HepG2 (cell line): ENCODE measurements at regions of chr7 and their contacts with region 1.

Region 1: DNA sequence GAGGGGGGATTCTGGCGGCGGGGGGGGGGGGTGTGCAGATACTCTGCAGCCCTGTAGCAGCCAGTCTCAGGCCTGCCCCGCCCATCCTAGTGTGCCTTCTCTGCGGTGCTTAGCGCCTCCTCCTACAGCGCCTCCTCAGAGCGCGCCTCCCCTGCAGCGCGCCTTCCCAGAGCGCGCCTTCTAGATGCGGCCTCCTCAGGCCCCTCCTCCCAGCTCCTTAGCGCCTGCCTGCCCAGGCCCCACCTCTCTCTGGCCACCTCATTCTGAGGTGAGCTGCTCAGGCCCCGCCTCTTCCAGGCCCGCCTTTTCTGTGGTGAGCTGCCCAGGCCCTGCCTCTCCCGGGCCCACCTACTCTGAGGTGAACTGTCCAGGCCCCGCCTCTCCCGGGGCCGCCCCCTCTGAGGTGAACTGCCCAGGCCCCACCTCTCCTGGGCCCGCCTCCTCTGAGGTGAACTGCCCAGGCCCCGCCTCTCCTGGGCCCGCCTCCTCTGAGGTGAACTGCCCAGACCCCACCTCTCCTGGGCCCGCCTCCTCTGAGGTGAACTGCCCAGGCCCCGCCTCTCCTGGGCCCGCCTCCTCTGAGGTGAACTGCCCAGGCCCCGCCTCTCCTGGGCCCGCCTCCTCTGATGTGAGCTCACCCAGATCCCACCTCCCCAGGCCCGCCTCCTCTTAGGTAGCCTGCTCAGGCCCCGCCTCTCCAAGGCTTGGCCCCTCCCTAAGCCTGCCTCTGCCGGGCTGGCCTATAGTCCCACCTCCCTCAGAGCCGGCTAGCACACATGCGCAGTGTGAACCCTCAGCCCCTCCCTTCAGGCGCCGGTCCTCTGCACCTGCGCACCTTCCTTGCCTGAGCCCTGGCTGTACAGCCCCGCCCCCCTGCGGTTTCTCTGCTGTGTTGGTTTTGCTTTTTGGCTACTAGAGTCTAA is 2.1 kb upstream of the SGCE start:
- DNase-seq: peak; percentile 90
- ATAC-seq: peak; percentile 89
- H3K4me3 ChIP-seq: peak overlapping the region in 2 of 3 experiments; percentile 55 to 78
- H3K27ac ChIP-seq: peak overlapping the region; percentile 77
- H3K4me1 ChIP-seq: peaks cover 22% of the 10 kb centered on the region
- H3K27me3 ChIP-seq: no peaks in the 10 kb centered on the region
- CTCF ChIP-seq: peak; percentile 32
- EP300 ChIP-seq: no peak
- POLR2A ChIP-seq: peak in 1 of 2 experiments; percentile 44; a peak in 1 of 4 replicates
- RAD21 ChIP-seq: no peak

Region 2: GRCh38 chr7:94449148-94449725 is 208.8 kb before region 1 on chr7:
- CTCF ChIA-PET with region 1: interaction called, 5 read pairs
- POLR2A ChIA-PET with region 1: interaction called, 37 read pairs
- in situ Hi-C with region 1: no loop called
- intact Hi-C with region 1: loop called (anchors 5 kb)
- DNase-seq: peak; percentile 45
- ATAC-seq: no peak
- H3K4me3 ChIP-seq: no peak overlapping the region
- H3K27ac ChIP-seq: no peak overlapping the region
- H3K4me1 ChIP-seq: peaks cover 57% of the 10 kb centered on the region
- H3K27me3 ChIP-seq: no peaks in the 10 kb centered on the region
- CTCF ChIP-seq: peak; percentile 63
- EP300 ChIP-seq: no peak
- POLR2A ChIP-seq: no peak
- RAD21 ChIP-seq: peak; percentile 68

Region 3: GRCh38 chr7:94620703-94621118 is 37.3 kb before region 1 on chr7:
- CTCF ChIA-PET with region 1: no interaction called
- POLR2A ChIA-PET with region 1: interaction called, 36 read pairs
- in situ Hi-C with region 1: no loop called
- intact Hi-C with region 1: loop called (anchors 1 kb)
- DNase-seq: peak; percentile 82
- ATAC-seq: peak; percentile 94
- H3K4me3 ChIP-seq: no peak overlapping the region
- H3K27ac ChIP-seq: peak overlapping the region; percentile 30
- H3K4me1 ChIP-seq: peaks cover 48% of the 10 kb centered on the region
- H3K27me3 ChIP-seq: no peaks in the 10 kb centered on the region
- CTCF ChIP-seq: no peak
- EP300 ChIP-seq: peak in 1 of 2 experiments; percentile 61; a peak in 1 of 4 replicates
- POLR2A ChIP-seq: no peak
- RAD21 ChIP-seq: no peak

Region 4: DNA sequence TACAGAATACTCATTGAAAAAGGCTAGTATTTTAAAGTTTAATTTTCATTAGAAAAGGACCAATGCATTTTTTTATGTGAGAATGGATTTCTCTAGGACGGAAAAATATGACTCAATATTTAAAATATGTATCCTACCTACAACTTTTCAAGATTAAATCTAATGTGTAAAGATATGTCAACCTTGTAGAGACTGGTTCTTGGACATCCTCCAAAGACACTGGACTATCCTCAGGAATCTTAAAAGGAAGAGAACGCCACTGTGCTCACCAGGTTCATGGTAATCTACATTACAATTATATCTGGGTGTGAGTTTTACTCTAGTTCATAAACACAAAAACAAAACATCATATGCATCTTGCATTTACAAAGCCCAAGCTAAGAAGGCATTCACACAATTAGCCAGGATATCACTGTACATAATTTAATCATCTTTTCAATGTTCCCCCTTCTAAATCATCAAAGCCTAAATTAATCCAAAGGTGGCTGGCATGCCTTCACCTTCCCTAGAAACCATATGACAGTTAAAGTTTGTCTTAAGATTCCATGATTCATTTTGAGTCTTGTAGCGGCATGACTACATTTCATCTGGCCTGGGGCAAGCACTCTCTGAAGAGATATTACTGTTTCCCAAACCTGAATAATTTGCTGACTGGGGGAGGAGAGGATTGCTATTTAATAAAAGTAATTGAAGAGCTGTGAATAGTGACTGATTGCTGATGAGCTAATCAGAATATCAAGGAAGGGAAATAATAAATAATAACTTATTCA is 14.1 kb before region 1 on chr7:
- CTCF ChIA-PET with region 1: no interaction called
- POLR2A ChIA-PET with region 1: interaction called, 33 read pairs
- in situ Hi-C with region 1: no loop called
- intact Hi-C with region 1: no loop called
- DNase-seq: no peak
- ATAC-seq: no peak
- H3K4me3 ChIP-seq: no peak overlapping the region
- H3K27ac ChIP-seq: peak overlapping the region; percentile 79
- H3K4me1 ChIP-seq: peaks cover 97% of the 10 kb centered on the region
- H3K27me3 ChIP-seq: no peaks in the 10 kb centered on the region
- CTCF ChIP-seq: no peak
- EP300 ChIP-seq: no peak
- POLR2A ChIP-seq: no peak
- RAD21 ChIP-seq: no peak

Region 5: DNA sequence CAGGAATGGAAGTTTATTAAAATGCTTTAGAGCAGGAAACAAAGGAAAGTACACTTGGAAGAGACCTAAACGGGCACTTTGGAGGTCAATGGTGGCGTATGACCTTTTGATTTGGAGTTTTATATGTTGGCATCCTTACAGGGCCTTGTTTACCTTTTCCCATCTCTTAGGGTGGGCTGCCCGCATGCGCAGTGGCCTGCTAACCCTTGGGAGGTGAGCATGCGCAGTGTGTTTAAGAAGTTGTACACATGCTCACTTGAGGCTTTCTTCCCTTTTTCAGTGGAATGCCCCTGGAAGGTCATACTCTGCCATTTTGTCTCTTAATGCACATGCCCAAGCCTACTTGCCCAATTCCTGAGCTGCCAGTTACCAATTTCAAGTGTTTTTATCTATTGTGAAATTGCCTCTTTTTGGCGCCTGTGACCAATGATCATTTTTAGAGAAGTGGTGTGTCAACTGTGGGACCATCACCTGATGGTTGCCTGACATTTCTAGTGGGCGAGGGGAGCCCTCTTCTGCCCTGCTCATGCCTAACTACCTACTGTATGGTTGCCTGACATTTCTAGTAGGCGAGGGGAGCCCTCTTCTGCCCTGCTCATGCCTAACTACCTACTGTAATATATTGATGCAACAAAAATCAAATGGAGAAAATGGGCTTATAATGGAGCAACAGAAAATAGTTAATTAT is 387.3 kb after region 1 on chr7:
- CTCF ChIA-PET with region 1: no interaction called
- POLR2A ChIA-PET with region 1: interaction called, 3 read pairs
- in situ Hi-C with region 1: no loop called
- intact Hi-C with region 1: loop called (anchors 1 kb)
- DNase-seq: peak; percentile 57
- ATAC-seq: peak; percentile 99
- H3K4me3 ChIP-seq: no peak overlapping the region
- H3K27ac ChIP-seq: no peak overlapping the region
- H3K4me1 ChIP-seq: 0 out of 2 replicates have a peak, but pooled peaks cover 11% of the 10 kb centered on the region
- H3K27me3 ChIP-seq: no peaks in the 10 kb centered on the region
- CTCF ChIP-seq: peak; percentile 84
- EP300 ChIP-seq: no peak
- POLR2A ChIP-seq: no peak
- RAD21 ChIP-seq: peak; percentile 85